AG04449 (cell line): ENCODE measurements at regions of chr2 and their contacts with region 1.

Region 1: DNA sequence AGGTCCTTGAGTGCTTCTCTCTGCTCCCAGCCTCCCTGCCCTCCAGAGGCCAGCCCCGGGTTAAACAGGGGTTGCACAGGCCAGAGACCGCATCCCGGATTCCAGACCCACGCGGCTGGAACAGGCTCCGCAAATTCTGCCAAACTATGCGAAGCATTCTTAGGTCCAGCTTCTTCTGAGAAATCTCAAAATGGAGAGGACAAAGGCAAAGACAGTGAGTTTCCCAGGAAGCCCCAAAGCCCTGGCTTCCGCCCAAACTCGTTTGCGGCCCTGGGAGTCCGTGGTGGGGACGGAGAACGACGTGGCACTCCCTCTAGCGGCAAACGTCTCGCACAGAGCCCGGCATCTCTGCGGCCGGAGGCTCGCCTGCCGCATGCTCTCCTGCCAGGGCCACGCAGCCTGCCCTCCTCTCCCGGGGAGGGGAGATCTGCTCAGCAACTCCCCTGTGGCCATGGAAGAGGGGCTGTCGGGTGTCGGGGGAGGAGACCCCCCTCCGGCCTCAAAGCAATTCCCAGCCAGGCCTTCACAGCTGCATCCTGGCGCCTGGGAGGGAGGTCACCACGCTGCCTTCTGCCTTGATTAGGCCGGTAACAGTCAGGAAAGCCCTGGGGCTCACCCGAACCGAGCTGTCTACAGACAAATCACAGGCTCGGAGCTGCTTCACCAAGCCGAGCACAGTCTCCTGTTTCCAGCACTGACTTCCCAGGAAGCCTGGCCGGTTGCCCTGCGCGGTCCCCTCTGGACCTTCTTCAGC is 33.4 kb upstream of the KLHL29 start:
- DNase-seq: no peak
- H3K4me3 ChIP-seq: no peak overlapping the region
- CTCF ChIP-seq: peak; percentile 97

Region 2: GRCh38 chr2:23199115-23199918 is 152.2 kb before region 1 on chr2:
- CTCF ChIA-PET with region 1: interaction called, 34 read pairs
- POLR2A ChIA-PET with region 1: no interaction called
- DNase-seq: no peak
- H3K4me3 ChIP-seq: no peak overlapping the region
- CTCF ChIP-seq: peak; percentile 71

Region 3: DNA sequence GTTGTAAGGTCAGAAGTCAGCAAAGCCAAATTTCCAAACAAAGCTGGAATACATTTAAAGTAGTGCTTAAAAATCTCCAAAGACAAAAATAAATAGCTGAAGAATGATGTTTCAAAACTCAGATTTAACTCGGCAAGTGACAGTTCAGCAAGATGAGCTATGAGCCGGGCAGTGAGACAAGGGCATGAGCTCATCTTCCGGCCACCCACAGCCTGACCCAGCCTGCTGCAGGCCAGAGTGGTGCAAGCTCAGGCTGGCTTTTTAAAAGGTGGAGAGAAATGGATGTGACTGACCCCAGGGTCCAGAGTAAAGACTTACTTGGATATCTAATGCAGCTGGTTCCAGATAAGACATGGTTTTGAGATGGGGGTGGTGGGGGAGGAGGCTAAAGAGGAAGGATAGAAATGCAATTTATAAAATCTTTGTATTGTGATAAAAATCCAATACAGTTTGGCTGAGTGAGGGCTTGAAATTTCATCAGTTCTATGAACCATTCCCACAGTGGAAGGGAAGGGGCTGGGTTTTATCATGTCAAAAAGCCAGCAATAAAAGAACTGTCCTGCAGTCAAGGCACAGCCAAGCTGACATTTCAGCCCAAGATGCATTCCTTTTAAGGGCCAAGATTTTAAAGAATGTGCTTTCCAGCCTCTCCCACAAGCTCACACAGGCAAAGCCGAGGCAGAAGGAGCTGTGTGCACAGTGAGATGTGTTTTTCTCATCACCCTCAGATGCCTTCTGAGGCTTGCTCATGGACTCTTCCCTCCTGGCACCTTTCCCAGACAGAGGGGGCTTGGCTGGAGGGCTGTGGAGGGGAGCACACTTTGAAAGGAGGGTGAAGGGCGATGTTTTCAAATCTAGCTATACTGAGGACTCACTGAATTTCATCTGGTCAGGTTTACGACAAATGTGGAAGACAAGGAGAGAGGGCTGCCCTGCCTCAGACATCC is 64.5 kb before region 1 on chr2:
- CTCF ChIA-PET with region 1: interaction called, 12 read pairs
- POLR2A ChIA-PET with region 1: no interaction called
- DNase-seq: peak; percentile 68
- H3K4me3 ChIP-seq: no peak overlapping the region
- CTCF ChIP-seq: no peak

Region 4: GRCh38 chr2:23363831-23364230 is 12.3 kb after region 1 on chr2:
- CTCF ChIA-PET with region 1: interaction called, 33 read pairs
- POLR2A ChIA-PET with region 1: no interaction called
- DNase-seq: no peak
- H3K4me3 ChIP-seq: no peak overlapping the region
- CTCF ChIP-seq: no peak

Region 5: DNA sequence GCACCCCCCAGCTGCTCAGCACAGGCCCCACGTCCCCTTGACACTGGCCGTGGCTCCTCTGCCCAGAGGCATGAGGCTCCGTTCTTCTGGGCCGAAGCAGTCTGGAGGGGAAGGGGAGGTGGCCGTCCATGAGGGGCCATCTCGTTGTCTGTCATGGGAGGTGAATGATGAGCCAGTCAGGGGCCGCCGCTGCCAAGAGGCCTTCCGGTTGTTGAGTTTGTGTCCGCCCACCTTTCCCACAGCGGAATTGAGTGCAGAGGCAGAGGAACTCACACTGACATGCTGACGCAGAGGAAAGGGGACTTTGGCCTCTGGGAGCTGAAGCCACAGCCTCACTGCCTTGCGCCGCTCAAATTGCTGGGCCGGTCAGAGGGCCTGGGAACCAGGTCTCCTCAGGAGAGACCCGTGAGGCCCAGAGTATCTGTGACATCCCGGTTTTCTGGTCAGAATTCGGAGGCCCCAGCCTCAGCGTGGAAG is 306.9 kb after region 1 on chr2:
- CTCF ChIA-PET with region 1: no interaction called
- POLR2A ChIA-PET with region 1: no interaction called
- DNase-seq: no peak
- H3K4me3 ChIP-seq: no peak overlapping the region
- CTCF ChIP-seq: no peak